Cardiac septum (tissue), 1 donor: ENCODE measurements at regions of chr12 and their contacts with region 1.

Region 1: DNA sequence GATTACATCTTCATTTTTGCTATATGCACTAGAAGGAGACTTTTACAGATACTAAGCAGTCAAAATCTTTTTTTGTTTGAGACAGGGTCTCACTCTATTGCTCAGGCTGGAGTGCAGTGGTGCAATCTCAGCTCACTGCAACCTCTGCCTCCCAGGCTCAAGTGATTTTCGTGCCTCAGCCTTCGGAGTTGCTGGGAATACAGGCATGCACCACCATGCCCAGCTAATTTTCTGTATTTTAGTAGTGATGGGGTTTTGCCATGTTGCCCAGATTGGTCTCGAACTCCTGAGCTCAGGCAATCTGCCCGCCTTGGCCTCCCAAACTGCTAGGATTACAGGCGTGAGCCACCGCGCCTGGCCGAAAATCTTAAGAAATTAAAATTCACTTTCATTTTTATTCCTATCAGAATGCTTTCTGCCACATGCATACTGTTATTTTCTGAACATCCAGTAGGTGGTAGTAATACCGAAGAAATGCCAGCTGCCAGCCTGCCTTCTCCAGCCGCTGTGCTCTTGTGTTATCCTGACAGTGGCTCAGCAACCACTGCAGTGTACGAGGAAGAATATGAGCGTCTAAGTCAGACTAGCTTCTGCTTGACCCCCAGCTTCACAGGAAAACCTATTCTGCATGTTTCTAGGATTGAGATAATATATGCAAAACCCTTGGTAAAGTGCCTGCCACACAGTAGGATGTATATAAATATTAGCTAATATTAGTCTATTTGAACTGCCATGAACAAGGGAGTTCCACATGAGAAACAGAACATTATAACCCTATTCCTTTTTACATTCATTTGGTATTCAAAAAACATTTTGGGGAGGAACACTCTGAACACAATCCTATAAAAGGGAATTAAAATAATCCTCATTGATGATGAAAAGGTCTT is 54.2 kb downstream of the RPAP3 start:
- DNase-seq: no peak

Region 2: DNA sequence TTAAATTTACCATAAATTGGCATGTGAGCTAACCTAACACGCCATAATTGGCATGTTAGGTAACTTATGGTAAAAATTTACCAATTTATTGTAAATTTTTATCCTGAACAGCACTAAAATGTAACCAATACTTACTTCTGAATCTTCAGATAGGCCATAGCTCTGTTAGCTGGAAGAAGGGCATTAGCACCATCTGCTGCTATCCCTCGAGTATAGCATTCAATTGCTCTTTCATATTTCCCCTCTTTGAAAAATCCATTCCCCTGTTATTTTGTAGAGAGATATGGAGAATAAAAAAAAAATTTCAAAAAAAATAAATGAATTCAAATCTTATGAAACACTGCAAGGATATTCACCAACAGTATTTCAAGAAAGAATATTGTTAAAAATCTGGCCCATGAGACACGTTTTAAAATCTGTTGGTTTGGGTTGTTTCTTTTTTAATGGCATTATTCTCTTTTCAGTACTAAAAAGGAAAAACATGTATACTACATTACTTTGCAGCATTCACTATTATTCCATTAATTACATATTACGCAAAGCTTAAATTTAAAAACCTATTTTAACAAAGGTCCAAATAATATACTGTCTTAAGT is 35.1 kb after region 1 on chr12:
- intact Hi-C with region 1: loop called (anchors 5 kb)
- DNase-seq: no peak

Region 3: GRCh38 chr12:47773062-47773857 is 121.6 kb after region 1 on chr12 and contains the start of gene SLC48A1:
- intact Hi-C with region 1: loop called (anchors 5 kb)
- DNase-seq: peak; percentile 90
- total RNA-seq, gene SLC48A1: 20.7 TPM